ENCODE measurements at regions of chr4 and their contacts with region 1.

Region 1: GRCh38 chr4:73662709-73663546 is 42.7 kb upstream of the RASSF6 start:
- DNase-seq: peak; percentile 77
- ATAC-seq: peak; percentile 64
- H3K4me3 ChIP-seq: no peak overlapping the region
- H3K27ac ChIP-seq: no peak overlapping the region; the same call in 1 of the 2 replicates
- H3K4me1 ChIP-seq: peaks cover 6% of the 10 kb centered on the region
- H3K27me3 ChIP-seq: no peaks in the 10 kb centered on the region
- CTCF ChIP-seq: peak; percentile 72
- POLR2A ChIP-seq: no peak
- RAD21 ChIP-seq: peak; percentile 87

Region 2: DNA sequence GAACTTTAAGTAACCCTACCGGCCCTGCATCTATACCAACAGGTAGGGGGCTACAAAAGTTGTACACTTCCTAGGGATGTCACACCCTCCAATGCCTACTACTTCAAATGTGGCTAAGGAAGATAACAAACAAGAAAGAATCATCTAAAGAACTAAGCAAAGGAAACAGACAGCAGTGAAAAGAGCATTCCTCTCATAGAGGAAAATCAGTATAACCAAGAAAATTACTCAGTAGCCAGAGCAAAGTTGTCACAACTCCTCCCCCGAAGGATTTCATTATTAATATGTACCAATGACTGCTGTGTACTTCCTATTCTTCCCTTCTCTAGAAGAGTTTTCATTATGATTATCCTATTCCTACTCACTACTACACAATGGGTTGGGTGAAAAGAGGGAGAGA is 417.0 kb before region 1 on chr4:
- CTCF ChIA-PET with region 1: no interaction called
- POLR2A ChIA-PET with region 1: no interaction called
- dilution Hi-C with region 1: no loop called
- in situ Hi-C with region 1: no loop called
- intact Hi-C with region 1: no loop called
- DNase-seq: no peak
- ATAC-seq: no peak
- H3K4me3 ChIP-seq: no peak overlapping the region
- H3K27ac ChIP-seq: no peak overlapping the region
- H3K4me1 ChIP-seq: no peaks in the 10 kb centered on the region
- H3K27me3 ChIP-seq: no peaks in the 10 kb centered on the region
- CTCF ChIP-seq: no peak
- POLR2A ChIP-seq: no peak
- RAD21 ChIP-seq: no peak

Region 3: GRCh38 chr4:74117024-74117534 is 454.2 kb after region 1 on chr4:
- CTCF ChIA-PET with region 1: no interaction called
- POLR2A ChIA-PET with region 1: no interaction called
- dilution Hi-C with region 1: no loop called
- in situ Hi-C with region 1: loop called (anchors 10 kb)
- intact Hi-C with region 1: no loop called
- DNase-seq: peak; percentile 98
- ATAC-seq: peak; percentile 76
- H3K4me3 ChIP-seq: no peak overlapping the region
- H3K27ac ChIP-seq: no peak overlapping the region
- H3K4me1 ChIP-seq: peaks cover 5% of the 10 kb centered on the region
- H3K27me3 ChIP-seq: no peaks in the 10 kb centered on the region
- CTCF ChIP-seq: no peak
- POLR2A ChIP-seq: no peak
- RAD21 ChIP-seq: no peak; the same call in 1 of the 2 replicates

Measured in IMR-90 (cell line).